ENCODE measurements at regions of chr17 and their contacts with region 1.

Region 1: GRCh38 chr17:51371732-51372151 is 111.4 kb downstream of the UTP18 start:
- DNase-seq: peak; percentile 14 to 72 (median 58)
- ATAC-seq: peak; percentile 78
- H3K4me3 ChIP-seq: no peak overlapping the region
- H3K4me3 Mint-ChIP-seq: peak overlapping the region in 5 of 10 donors; percentile 14 to 61 (median 43)
- H3K27ac ChIP-seq: no peak overlapping the region
- H3K27ac Mint-ChIP-seq: peak overlapping the region in 6 of 9 donors; percentile 5 to 82 (median 47)
- H3K4me1 ChIP-seq: peaks cover 0 to 11% of the 10 kb centered on the region in 2 donors
- H3K4me1 Mint-ChIP-seq: peaks cover 4 to 26% (median 21%) of the 10 kb centered on the region in 7 donors
- H3K27me3 ChIP-seq: no peaks in the 10 kb centered on the region
- H3K27me3 Mint-ChIP-seq: peaks cover 0 to 3% (median 0%) of the 10 kb centered on the region in 5 donors

Region 2: GRCh38 chr17:51427856-51428255 is 56.1 kb after region 1 on chr17:
- CTCF ChIA-PET with region 1: interaction called, 10 read pairs
- POLR2A ChIA-PET with region 1: interaction called, 3 read pairs
- intact Hi-C with region 1: loop called in 1 of 2 experiments (anchors 2 kb)
- DNase-seq: peak; percentile 45 to 90 (median 72)
- ATAC-seq: peak; percentile 93
- H3K4me3 ChIP-seq: peak overlapping the region; percentile 32
- H3K4me3 Mint-ChIP-seq: peak overlapping the region; percentile 26 to 84 (median 78)
- H3K27ac ChIP-seq: peak overlapping the region; percentile 87
- H3K27ac Mint-ChIP-seq: peak overlapping the region; percentile 91 to 100 (median 97)
- H3K4me1 ChIP-seq: peaks cover 12 to 48% of the 10 kb centered on the region in 2 donors
- H3K4me1 Mint-ChIP-seq: peaks cover 34 to 77% (median 61%) of the 10 kb centered on the region in 7 donors
- H3K27me3 ChIP-seq: no peaks in the 10 kb centered on the region
- H3K27me3 Mint-ChIP-seq: no peaks in the 10 kb centered on the region

Region 3: DNA sequence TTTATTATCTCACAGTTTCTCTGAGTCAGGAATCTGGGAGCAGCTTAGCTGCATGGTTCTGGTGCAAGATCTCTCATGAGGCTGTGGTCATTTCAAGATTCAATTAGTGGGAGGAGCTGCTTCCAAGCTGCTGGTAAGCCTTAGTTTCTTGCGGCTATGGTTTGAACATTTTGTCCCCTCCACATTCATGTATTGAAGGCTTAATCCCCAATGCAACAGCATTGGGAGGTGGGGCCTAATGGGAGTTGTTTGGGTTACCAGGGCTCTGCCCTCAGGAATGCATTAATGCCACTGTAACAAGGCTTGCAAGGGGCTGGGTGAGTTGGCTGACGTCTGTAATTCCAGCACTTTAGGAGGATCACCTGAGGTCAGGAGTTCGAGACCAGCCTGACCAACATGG is 161.5 kb after region 1 on chr17:
- CTCF ChIA-PET with region 1: interaction called, 48 read pairs
- POLR2A ChIA-PET with region 1: interaction called, 5 read pairs
- intact Hi-C with region 1: loop called (anchors 1 kb)
- DNase-seq: no peak
- ATAC-seq: no peak
- H3K4me3 ChIP-seq: no peak overlapping the region
- H3K4me3 Mint-ChIP-seq: no peak overlapping the region
- H3K27ac ChIP-seq: no peak overlapping the region
- H3K27ac Mint-ChIP-seq: no peak overlapping the region
- H3K4me1 ChIP-seq: no peaks in the 10 kb centered on the region
- H3K4me1 Mint-ChIP-seq: no peaks in the 10 kb centered on the region
- H3K27me3 ChIP-seq: no peaks in the 10 kb centered on the region
- H3K27me3 Mint-ChIP-seq: peaks cover 0 to 11% (median 0%) of the 10 kb centered on the region in 5 donors

Region 4: DNA sequence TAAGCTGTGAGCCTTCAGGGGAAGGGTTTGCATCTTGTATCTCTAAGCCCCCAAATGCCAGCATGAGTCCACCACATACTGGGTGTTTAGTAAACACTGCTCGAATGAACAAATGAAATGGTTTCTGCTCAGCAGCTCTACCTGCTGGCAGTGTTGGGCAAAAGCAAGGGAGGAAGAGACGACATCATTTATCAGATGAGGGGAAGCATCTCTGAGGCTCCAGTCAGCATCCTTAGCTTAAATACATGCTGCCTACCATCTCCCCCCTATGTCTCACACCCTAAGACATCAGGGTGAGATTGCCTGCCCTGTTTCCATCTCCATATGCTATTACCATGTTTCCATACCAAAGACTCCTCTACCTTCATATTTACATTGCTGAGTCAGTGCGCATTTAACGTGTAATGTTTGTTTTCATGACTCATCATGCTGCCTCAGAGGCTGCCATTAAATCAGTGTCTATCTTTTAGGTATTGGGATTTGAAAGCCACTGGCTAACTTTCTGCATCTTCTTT is 268.4 kb after region 1 on chr17:
- CTCF ChIA-PET with region 1: interaction called, 19 read pairs
- POLR2A ChIA-PET with region 1: no interaction called
- intact Hi-C with region 1: no loop called
- DNase-seq: peak in 5 of 9 donors; percentile 5 to 19 (median 9)
- ATAC-seq: no peak
- H3K4me3 ChIP-seq: no peak overlapping the region
- H3K4me3 Mint-ChIP-seq: no peak overlapping the region
- H3K27ac ChIP-seq: no peak overlapping the region
- H3K27ac Mint-ChIP-seq: no peak overlapping the region
- H3K4me1 ChIP-seq: no peaks in the 10 kb centered on the region
- H3K4me1 Mint-ChIP-seq: no peaks in the 10 kb centered on the region
- H3K27me3 ChIP-seq: no peaks in the 10 kb centered on the region
- H3K27me3 Mint-ChIP-seq: peaks cover 4 to 18% (median 15%) of the 10 kb centered on the region in 5 donors

Measured in naive thymus-derived CD4-positive, alpha-beta T cell (primary cell).